MCF 10A (cell line): ENCODE measurements at regions of chr2 and their contacts with region 1.

Region 1: DNA sequence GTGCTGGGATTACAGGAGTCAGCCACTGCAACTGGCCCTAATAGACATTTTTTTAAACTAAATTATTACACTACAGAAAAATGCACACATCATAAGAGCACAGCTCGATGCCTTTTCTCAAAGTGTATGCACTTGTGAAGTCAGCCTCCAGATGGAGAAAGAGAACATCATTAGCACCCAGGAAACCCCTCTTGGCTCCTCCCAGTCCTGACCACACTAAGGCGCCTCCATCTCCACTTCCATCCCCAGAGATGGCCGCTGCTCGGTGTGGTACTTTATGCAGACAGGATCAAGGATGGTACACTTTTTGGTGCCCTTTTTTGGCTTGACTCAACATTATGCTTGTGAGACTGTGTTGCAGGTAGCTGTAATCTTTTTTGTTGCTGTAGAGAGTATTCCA is 34.8 kb downstream of the RRM2 start:
- DNase-seq: no peak
- H3K4me3 Mint-ChIP-seq: no peak overlapping the region
- H3K27ac Mint-ChIP-seq: no peak overlapping the region
- H3K4me1 Mint-ChIP-seq: peaks cover 8% of the 10 kb centered on the region
- H3K27me3 Mint-ChIP-seq: no peaks in the 10 kb centered on the region
- CTCF ChIP-seq: no peak

Region 2: DNA sequence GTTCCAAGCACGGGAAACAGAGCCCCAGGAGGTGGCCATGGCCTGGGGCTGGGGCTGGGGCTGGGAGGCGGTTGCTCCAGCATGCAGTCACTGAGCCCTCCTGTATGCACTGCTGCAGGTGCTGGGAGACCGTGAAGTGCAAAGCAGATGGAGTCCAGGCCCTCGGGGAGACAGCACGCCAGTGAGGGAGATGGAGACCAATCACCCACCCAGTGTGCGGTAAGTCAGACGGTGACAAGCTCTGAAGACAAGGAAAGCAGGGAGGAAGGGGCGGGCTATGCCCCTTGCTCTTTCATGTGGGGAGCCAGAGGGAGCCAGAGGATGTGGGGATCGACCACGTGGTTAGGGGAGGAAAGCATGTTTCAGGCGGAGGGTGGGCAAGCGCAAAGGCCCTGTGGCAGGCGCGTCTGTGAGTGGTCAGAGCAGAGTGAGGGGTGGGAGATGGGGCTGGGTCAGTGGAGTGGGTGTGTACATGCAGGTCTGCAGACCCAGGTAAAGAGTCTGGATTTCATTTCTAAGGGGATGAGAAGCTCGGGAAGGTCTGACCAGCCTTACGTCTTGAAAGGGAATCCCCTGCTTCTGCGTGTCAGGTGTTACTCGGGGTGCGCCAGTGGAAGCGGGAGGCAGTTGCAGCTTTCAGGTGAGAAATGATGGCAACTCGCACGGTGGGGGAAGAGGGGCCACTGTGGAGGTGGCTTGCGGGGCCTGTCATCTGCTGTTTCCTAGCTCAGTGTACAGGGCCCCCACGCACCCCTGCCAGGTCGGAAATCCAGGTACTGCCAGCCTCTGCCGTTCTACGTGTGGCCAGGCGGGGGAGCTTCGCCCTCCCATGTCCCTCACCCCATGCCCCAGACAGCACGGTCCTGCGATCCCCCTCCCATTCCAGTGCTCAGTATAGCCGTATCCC is 15.3 kb before region 1 on chr2:
- CTCF ChIA-PET with region 1: interaction called, 16 read pairs
- POLR2A ChIA-PET with region 1: no interaction called
- intact Hi-C with region 1: no loop called
- DNase-seq: peak; percentile 28
- H3K4me3 Mint-ChIP-seq: no peak overlapping the region
- H3K27ac Mint-ChIP-seq: no peak overlapping the region
- H3K4me1 Mint-ChIP-seq: peaks cover 5% of the 10 kb centered on the region
- H3K27me3 Mint-ChIP-seq: no peaks in the 10 kb centered on the region
- CTCF ChIP-seq: peak; percentile 52

Region 3: DNA sequence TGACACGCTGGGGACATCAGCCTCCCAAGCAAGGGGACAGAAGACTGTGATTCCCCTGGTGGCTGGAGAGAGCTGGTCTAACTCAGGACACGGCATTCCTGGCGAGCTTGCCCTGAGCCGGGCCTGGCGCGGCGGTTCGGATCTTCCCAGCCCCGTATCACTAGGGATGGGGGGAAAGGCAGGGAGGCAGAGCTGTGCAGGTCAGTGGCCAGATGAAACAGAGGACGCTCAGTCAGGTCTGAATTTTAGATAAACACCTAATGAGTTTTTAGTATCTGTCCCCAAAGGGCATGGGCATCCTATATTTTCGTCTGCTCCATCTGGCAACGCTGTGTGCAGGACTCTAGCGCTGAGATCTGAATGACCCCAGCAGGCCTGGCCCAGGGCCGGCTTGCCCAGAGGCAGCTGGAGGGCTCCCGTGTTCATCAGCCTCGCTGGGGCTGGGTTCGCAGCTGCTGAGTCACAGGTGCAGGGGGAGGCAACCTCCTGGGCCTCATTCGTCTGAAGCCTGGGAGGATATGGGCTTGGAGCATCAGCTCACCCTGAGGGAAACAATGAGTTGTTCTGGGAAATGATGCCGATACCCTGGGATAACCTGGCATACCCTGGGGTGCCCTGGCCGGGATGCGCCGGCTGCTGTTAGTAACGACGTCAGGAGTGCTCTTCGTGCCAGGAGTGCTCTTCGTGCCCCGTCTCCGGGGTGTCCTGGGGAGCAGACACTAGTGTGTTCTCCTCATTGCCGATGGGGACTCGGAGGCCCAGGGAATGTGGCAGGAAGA is 97.3 kb after region 1 on chr2:
- CTCF ChIA-PET with region 1: no interaction called
- POLR2A ChIA-PET with region 1: no interaction called
- intact Hi-C with region 1: no loop called
- DNase-seq: peak; percentile 92
- H3K4me3 Mint-ChIP-seq: no peak overlapping the region
- H3K27ac Mint-ChIP-seq: no peak overlapping the region
- H3K4me1 Mint-ChIP-seq: peaks cover 8% of the 10 kb centered on the region
- H3K27me3 Mint-ChIP-seq: no peaks in the 10 kb centered on the region
- CTCF ChIP-seq: no peak